Cardiac septum (tissue), 1 donor: ENCODE measurements at regions of chr22 and their contacts with region 1.

Region 1: GRCh38 chr22:23178512-23179254 is 1.6 kb upstream of the BCR start:
- DNase-seq: no peak

Region 2: DNA sequence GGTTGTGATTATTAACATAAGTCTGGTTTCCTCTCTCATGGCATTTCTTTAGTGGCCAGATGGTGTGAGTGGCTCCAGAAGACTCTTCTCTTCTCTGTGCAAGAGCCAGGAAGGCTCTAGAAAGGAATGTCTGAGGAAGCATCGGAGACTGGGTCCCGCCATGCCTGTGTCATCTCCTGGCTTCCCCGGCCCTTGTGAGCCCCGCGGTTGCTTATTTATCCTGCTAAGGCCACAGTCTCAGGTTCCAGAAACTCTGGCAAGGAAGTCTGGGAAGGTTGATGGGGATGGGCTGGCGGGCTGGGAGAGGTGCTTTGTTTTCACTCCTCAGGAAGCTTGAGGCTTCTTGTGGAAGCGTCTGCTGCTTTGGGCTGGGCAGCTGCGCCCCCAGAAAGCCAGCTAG is 20.5 kb after region 1 on chr22:
- intact Hi-C with region 1: no loop called
- DNase-seq: no peak

Region 3: DNA sequence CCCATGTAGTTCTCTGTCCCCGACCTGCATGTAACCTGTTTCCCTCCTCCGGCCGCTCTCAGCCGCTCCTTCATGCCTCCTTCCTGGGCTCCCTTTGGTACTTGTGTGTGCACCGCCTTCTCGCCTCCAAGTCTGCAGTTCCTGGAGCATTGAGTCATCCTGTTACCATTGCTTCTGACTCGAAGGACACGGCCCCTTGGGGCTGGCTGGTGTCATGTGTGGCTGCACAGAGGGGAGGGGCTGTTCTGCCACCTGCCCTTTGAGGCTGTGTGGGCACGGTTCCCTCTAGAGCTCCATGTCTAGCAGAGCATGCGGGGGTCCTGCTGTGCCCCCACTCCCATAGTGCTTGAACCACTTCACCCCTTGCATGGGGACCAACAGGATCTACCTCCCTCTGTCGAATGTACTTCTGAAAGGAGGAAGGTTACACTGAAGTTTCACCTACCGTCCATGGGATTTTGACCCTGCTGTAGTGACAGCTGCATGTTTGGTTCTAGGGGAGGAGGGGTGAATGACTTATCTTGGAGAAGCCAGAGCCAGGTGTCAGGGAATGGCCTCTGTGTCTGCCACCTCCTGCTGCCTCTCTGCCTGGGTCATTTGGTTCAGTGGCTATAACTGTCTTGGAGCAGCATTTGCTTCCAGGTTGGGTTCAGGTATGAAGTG is 41.3 kb after region 1 on chr22:
- intact Hi-C with region 1: loop called (anchors 5 kb)
- DNase-seq: no peak

Region 4: GRCh38 chr22:23230348-23231068 is 51.8 kb after region 1 on chr22:
- intact Hi-C with region 1: no loop called
- DNase-seq: no peak

Region 5: GRCh38 chr22:23240639-23241389 is 62.1 kb after region 1 on chr22:
- intact Hi-C with region 1: no loop called
- DNase-seq: no peak

Region 6: DNA sequence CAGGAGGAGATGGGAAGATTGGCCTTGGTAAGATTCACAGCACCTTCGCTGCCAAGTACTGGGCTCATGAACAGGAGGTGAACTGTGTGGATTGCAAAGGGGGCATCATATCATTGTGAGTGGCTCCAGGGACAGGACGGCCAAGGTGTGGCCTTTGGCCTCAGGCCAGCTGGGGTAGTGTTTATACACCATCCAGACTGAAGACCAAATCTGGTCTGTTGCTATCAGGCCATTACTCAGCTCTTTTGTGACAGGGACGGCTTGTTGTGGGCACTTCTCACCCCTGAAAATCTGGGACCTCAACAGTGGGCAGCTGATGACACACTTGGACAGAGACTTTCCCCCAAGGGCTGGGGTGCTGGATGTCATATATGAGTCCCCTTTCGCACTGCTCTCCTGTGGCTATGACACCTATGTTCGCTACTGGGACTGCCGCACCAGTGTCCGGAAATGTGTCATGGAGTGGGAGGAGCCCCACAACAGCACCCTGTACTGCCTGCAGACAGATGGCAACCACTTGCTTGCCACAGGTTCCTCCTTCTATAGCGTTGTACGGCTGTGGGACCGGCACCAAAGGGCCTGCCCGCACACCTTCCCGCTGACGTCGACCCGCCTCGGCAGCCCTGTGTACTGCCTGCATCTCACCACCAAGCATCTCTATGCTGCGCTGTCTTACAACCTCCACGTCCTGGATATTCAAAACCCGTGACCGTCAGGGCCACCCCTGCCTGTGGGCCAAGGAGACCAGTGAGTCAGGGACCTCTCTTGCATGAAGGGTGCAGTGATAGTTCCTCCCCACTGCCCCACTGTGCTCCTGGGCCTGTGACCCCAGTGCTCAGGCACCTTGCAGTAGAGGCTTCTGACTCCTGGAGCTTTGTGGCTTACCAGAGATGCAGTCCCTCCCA is 85.2 kb after region 1 on chr22:
- intact Hi-C with region 1: loop called (anchors 5 kb)
- DNase-seq: no peak

Region 7: DNA sequence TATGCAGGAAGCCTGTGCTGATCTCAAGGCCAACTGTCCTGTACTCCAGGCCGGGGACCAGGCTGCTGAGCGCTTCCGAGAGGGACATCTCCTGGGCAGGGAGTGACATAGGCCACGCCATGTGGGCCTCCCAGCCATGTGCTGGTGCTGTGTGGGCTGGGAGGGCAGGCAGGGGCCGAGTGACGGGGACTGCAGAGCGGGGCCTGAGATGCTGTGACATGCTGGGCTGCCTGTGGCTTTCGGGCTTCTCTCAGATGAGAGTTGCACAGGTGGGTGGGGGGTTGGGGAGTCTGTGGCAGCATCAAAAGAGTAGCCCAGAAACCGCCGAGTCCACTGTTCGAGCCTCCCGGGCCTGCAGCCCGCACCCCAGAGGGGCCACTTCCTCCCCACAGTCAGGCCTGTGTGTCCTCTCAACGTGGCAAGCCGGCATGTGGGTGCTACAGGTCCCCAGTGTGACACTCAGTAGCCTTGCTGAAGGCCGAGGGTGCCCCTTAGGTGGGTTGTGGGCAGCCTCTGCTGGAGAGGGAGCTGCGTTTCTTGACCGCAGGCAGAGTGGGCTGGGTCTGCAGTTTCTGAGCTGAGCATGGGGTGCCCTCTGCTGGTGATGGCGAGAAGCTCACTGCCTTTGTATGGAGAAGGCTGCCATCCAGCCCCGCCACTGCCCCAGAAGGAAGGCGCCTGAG is 102.9 kb after region 1 on chr22:
- intact Hi-C with region 1: loop called (anchors 1 kb)
- DNase-seq: peak; percentile 94

Region 8: DNA sequence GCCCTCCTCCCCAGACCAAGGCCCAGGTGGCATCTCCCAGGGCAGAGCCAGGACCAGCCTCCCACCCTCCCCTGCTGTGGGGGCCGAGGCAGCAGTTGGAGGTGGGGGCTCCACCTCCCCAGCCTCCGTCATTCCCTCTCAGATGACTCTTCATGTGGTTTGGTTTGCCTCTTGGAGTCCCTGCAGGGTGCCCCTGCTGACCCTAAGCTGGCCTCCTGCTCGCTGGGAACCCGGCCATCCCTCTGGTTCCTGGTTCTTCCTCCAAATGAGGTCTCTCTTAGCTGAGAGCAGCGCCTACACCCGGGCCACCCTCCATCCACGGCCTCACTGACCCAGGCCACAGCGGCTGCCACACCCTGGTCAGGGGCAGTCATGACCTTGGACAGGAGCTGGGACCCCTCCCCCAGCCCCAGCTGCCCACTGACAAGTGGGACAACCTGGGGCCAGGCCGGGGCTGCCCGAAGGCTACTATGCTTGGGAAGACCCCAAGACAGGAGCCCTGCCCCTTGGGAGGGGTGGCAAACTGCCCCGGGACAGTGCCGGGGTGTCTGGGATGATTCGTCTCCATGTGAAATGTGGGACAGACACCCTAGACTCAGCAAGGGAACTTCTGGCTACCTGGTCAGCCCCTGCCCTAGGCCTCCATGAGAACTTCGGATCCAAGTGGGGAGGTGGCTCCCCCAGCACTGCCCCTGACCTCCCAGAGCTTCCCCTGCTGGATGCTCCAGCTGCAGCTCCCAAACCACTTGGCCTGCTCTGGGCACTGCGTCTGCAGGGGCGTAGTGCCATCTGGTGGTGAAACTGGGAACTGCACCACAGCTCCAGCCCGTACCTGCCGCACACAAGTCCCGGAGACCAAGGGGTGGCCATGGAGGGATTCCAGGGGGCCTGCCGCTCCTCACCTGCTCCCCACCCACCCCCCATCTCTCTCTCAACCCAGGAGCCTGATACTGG is 206.9 kb after region 1 on chr22:
- intact Hi-C with region 1: loop called (anchors 5 kb)
- DNase-seq: peak; percentile 91